ENCODE measurements at regions of chr22 and their contacts with region 1.

Region 1: GRCh38 chr22:28594797-28595462 is 84.7 kb downstream of the TTC28 start:
- DNase-seq: no peak
- H3K4me3 ChIP-seq: no peak overlapping the region
- H3K27ac ChIP-seq: no peak overlapping the region
- H3K4me1 ChIP-seq: peaks cover 6% of the 10 kb centered on the region
- H3K27me3 ChIP-seq: no peaks in the 10 kb centered on the region
- CTCF ChIP-seq: peak; percentile 69 to 84 (median 71)
- POLR2A ChIP-seq: no peak

Region 2: DNA sequence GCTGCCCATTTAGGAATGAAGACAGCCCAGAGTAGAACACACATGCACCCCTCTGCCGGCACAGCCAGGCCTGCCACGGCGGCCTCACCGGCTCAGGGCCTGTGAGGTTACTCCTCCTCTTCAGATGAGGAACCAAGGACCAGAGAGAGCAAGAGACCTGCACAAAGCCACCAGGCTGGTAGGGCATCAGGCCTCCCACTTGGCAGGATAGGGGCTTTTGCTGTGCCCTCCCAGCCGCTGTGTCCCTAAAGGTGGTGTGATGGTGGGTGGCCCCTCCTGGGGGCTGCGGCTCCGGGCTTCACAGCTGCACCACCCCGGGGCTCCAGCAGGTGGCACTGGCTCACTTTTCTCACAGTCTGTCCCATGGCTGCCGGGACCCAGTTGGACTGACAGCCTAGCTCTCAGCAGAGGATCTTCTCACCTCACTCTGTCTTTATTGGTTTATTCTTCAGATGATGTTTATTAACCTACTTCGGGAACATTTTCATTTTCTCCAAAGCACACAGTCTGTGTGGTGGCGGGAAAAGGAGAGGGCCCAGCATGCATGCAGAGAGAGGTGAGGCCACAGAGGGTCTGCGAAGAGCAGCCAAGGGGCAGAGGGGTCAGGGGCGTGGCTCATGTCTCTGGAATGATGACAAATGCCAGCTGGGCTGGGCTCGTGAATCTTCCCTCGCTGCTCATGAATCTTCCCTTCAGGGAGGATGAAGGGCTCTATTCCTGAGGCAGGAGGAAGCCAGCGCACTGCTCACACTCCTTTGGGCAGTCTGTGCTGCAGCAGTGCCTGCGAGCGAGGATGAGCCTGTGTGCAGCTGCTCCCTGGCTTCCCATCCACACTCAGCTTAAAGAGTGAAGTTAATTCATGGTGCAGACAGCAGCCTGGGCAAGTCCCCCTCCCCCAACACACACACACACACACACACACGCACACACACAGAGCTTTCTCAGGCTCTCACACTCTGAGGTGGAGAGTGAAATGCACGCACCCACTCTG is 574.8 kb before region 1 on chr22:
- intact Hi-C with region 1: loop called (anchors 10 kb)
- DNase-seq: no peak
- H3K4me3 ChIP-seq: no peak overlapping the region
- H3K27ac ChIP-seq: peak overlapping the region; percentile 12
- H3K4me1 ChIP-seq: peaks cover 33% of the 10 kb centered on the region
- H3K27me3 ChIP-seq: no peaks in the 10 kb centered on the region
- CTCF ChIP-seq: peak; percentile 93 to 97 (median 94)
- POLR2A ChIP-seq: no peak

Region 3: DNA sequence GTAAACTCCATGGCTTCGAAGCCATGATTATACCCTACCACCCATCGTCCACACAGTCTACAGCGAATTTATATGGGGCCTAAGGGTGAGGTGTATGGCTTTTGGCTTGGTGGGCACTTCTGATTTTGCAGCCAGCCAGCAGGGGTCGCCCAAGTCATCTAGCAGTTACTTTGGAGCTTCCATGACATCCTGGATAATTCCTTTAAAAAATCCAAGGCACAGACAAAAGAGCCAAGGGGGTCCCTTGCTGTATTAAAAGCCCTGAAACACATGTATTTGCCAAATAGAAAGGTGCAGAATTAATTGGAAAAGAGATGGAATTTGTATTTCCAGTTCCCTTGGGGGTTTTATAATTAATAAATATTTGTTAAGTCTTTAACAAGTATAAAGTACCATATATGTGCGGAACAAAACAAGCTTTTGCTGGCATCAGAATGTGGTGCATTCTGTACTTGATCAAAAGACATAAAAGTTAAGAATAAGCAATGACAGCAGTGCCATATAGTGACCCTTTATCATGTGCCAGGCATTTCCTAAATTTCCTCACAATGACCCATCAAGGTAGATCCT is 543.1 kb before region 1 on chr22:
- intact Hi-C with region 1: loop called (anchors 10 kb)
- DNase-seq: no peak
- H3K4me3 ChIP-seq: no peak overlapping the region
- H3K27ac ChIP-seq: no peak overlapping the region
- H3K4me1 ChIP-seq: peaks cover 5% of the 10 kb centered on the region
- H3K27me3 ChIP-seq: no peaks in the 10 kb centered on the region
- CTCF ChIP-seq: peak; percentile 45 to 82 (median 77)
- POLR2A ChIP-seq: no peak

Region 4: DNA sequence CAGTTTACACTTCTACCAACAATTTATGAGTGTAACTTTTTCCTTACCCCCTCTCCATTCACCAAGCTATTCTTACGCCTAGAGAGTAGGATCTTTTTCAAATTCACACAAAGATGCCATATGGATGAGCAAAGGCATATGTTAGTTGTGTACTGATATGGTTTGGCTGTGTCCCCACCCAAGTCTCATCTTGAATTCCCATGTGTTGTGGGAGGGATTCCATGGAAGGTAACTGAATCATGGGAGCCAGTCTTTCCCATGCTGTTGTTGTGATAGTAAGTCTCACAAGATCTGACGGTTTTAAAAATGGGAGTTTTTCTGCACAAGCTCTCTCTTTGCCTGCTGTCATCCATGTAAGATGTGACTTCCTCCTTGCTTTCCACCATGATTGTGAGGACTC is 44.4 kb after region 1 on chr22:
- intact Hi-C with region 1: no loop called
- DNase-seq: no peak
- H3K4me3 ChIP-seq: no peak overlapping the region
- H3K27ac ChIP-seq: no peak overlapping the region
- H3K4me1 ChIP-seq: no peaks in the 10 kb centered on the region
- H3K27me3 ChIP-seq: no peaks in the 10 kb centered on the region
- CTCF ChIP-seq: no peak
- POLR2A ChIP-seq: no peak